ENCODE measurements at regions of chr19 and their contacts with region 1.

Region 1: GRCh38 chr19:14517840-14518505 is at the start of gene DNAJB1:
- DNase-seq: peak in 11 of 14 experiments; percentile 49 to 98 (median 67)
- ATAC-seq: peak; percentile 7
- H3K4me3 ChIP-seq: peak within 1 kb of the TSS; percentile 93
- H3K4me3 Mint-ChIP-seq: peak within 1 kb of the TSS; percentile 100
- H3K27ac ChIP-seq: peak within 1 kb of the TSS; percentile 91 to 97
- H3K27ac Mint-ChIP-seq: peak within 1 kb of the TSS; percentile 100
- H3K4me1 ChIP-seq: peaks cover 79% of the 10 kb centered on the region
- H3K4me1 Mint-ChIP-seq: peaks cover 82% of the 10 kb centered on the region
- H3K27me3 ChIP-seq: no peaks in the 10 kb centered on the region
- H3K27me3 Mint-ChIP-seq: no peaks in the 10 kb centered on the region
- CTCF ChIP-seq: no peak
- total RNA-seq, gene DNAJB1: 666 to 672 TPM

Region 2: DNA sequence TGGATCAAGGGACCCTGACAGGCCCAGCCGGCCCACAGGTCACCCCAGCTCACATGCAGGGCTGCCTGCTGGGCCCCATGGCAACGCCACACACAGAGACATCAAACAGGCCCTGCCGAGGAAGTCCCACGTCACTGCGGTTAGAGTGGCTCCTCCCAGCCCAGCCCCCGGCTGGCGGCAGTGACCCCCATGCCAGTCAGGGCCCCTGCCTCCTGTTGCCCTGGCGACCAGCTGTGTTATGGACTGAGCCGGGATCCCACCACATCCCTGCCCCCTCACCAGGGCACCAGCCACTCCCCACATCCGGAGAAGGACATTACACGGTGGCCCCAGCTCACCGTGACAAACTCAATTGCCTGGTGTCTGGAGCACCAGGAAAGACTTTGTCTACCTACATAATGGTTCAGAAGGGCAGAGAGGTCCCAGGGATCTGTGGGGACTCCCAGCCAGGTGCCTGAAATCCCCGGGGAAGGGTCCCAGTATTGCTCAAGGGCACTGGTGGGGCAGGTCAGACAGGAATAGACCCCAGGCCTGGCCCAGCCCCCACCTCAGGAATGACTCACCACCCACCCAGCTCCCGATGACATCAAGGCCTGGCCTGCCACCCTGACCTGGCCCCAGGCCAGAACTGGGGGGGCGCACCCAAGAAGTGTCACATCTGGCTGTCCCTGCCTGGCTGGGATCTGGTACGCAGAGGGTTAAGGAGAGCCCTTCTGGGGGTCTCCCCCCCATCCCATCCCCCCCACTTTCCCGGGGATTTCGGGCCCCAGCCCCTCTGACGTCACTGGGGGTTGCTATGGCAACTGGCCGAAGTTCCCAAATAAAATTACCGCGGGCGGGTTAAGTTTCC is 671.2 kb before region 1 on chr19:
- CTCF ChIA-PET with region 1: no interaction called
- POLR2A ChIA-PET with region 1: interaction called, 3 read pairs
- intact Hi-C with region 1: loop called in 1 of 2 experiments (anchors 5 kb)
- DNase-seq: peak; percentile 86 to 99 (median 96)
- ATAC-seq: peak; percentile 61
- H3K4me3 ChIP-seq: peak overlapping the region; percentile 76
- H3K4me3 Mint-ChIP-seq: peak overlapping the region; percentile 86
- H3K27ac ChIP-seq: peak overlapping the region; percentile 100
- H3K27ac Mint-ChIP-seq: peak overlapping the region; percentile 99
- H3K4me1 ChIP-seq: peaks cover 86% of the 10 kb centered on the region
- H3K4me1 Mint-ChIP-seq: peaks cover 63% of the 10 kb centered on the region
- H3K27me3 ChIP-seq: no peaks in the 10 kb centered on the region
- H3K27me3 Mint-ChIP-seq: no peaks in the 10 kb centered on the region
- CTCF ChIP-seq: no peak

Region 3: GRCh38 chr19:14496028-14496833 is 21.7 kb before region 1 on chr19 and contains the start of gene GIPC1:
- CTCF ChIA-PET with region 1: interaction called, 5 read pairs
- POLR2A ChIA-PET with region 1: interaction called, 70 read pairs
- intact Hi-C with region 1: no loop called
- DNase-seq: peak; percentile 61 to 91 (median 78)
- ATAC-seq: peak; percentile 87
- H3K4me3 ChIP-seq: peak within 1 kb of the TSS; percentile 76
- H3K4me3 Mint-ChIP-seq: peak within 1 kb of the TSS; percentile 91
- H3K27ac ChIP-seq: peak within 1 kb of the TSS; percentile 56 to 70
- H3K27ac Mint-ChIP-seq: peak within 1 kb of the TSS; percentile 70
- H3K4me1 ChIP-seq: peaks cover 30% of the 10 kb centered on the region
- H3K4me1 Mint-ChIP-seq: peaks cover 38% of the 10 kb centered on the region
- H3K27me3 ChIP-seq: no peaks in the 10 kb centered on the region
- H3K27me3 Mint-ChIP-seq: no peaks in the 10 kb centered on the region
- CTCF ChIP-seq: no peak
- total RNA-seq, gene GIPC1: 17.8 to 21.0 TPM

Region 4: GRCh38 chr19:14529254-14530004 is 11.5 kb after region 1 on chr19 and contains the start of gene TECR:
- CTCF ChIA-PET with region 1: interaction called, 5 read pairs
- POLR2A ChIA-PET with region 1: interaction called, 430 read pairs
- intact Hi-C with region 1: loop called (anchors 1 kb)
- DNase-seq: peak; percentile 99 to 100 (median 100)
- ATAC-seq: peak; percentile 92
- H3K4me3 ChIP-seq: peak within 1 kb of the TSS; percentile 92
- H3K4me3 Mint-ChIP-seq: peak within 1 kb of the TSS; percentile 92
- H3K27ac ChIP-seq: peak within 1 kb of the TSS; percentile 85 to 88
- H3K27ac Mint-ChIP-seq: peak within 1 kb of the TSS; percentile 100
- H3K4me1 ChIP-seq: peaks cover 59% of the 10 kb centered on the region
- H3K4me1 Mint-ChIP-seq: peaks cover 57% of the 10 kb centered on the region
- H3K27me3 ChIP-seq: no peaks in the 10 kb centered on the region
- H3K27me3 Mint-ChIP-seq: no peaks in the 10 kb centered on the region
- CTCF ChIP-seq: no peak
- total RNA-seq, gene TECR: 217 to 232 TPM

Region 5: GRCh38 chr19:14550201-14550784 is 32.3 kb after region 1 on chr19:
- CTCF ChIA-PET with region 1: interaction called, 8 read pairs
- POLR2A ChIA-PET with region 1: interaction called, 46 read pairs
- intact Hi-C with region 1: no loop called
- DNase-seq: no peak
- ATAC-seq: no peak
- H3K4me3 ChIP-seq: no peak overlapping the region
- H3K4me3 Mint-ChIP-seq: no peak overlapping the region
- H3K27ac ChIP-seq: no peak overlapping the region
- H3K27ac Mint-ChIP-seq: peak overlapping the region; percentile 92
- H3K4me1 ChIP-seq: peaks cover 54% of the 10 kb centered on the region
- H3K4me1 Mint-ChIP-seq: peaks cover 48% of the 10 kb centered on the region
- H3K27me3 ChIP-seq: no peaks in the 10 kb centered on the region
- H3K27me3 Mint-ChIP-seq: no peaks in the 10 kb centered on the region
- CTCF ChIP-seq: no peak

Region 6: GRCh38 chr19:14683439-14683838 is 165.5 kb after region 1 on chr19:
- CTCF ChIA-PET with region 1: no interaction called
- POLR2A ChIA-PET with region 1: no interaction called
- intact Hi-C with region 1: no loop called
- DNase-seq: peak in 3 of 14 experiments; percentile 53 to 61 (median 55)
- ATAC-seq: peak; percentile 66
- H3K4me3 ChIP-seq: no peak overlapping the region
- H3K4me3 Mint-ChIP-seq: no peak overlapping the region
- H3K27ac ChIP-seq: no peak overlapping the region
- H3K27ac Mint-ChIP-seq: peak overlapping the region; percentile 38
- H3K4me1 ChIP-seq: peaks cover 14% of the 10 kb centered on the region
- H3K4me1 Mint-ChIP-seq: no peaks in the 10 kb centered on the region
- H3K27me3 ChIP-seq: no peaks in the 10 kb centered on the region
- H3K27me3 Mint-ChIP-seq: peaks cover 10% of the 10 kb centered on the region
- CTCF ChIP-seq: no peak

Measured in CD4-positive, alpha-beta T cell (primary cell).